Caco-2 (cell line): ENCODE measurements at regions of chr2 and their contacts with region 1.

Region 1: DNA sequence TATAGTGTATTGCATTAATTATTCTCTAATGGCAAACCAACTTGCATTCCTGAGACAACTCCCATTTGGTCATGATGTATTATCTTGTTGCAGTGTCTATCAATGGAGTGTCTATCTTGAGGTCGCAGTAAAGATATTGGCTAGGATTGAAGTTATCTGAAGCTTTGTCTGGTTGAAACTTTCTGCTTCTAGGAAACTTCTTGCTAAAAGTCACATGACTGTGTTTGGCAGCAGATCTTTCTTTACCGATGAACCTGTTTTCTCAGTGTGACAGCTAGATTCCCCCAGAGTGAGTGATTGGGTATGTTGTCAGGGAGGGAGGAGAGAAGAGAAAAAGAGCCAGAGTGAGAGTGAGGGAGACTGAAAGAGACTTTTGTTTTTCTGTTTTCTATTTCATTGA is 119.6 kb downstream of the QPCT start:
- DNase-seq: peak in 1 of 2 experiments; percentile 34
- H3K4me3 ChIP-seq: no peak overlapping the region
- H3K4me3 Mint-ChIP-seq: peak overlapping the region; percentile 5
- H3K27ac Mint-ChIP-seq: no peak overlapping the region
- H3K4me1 ChIP-seq: no peaks in the 10 kb centered on the region
- H3K4me1 Mint-ChIP-seq: peaks cover 14% of the 10 kb centered on the region
- H3K27me3 ChIP-seq: no peaks in the 10 kb centered on the region
- H3K27me3 Mint-ChIP-seq: no peaks in the 10 kb centered on the region
- CTCF ChIP-seq: no peak

Region 2: DNA sequence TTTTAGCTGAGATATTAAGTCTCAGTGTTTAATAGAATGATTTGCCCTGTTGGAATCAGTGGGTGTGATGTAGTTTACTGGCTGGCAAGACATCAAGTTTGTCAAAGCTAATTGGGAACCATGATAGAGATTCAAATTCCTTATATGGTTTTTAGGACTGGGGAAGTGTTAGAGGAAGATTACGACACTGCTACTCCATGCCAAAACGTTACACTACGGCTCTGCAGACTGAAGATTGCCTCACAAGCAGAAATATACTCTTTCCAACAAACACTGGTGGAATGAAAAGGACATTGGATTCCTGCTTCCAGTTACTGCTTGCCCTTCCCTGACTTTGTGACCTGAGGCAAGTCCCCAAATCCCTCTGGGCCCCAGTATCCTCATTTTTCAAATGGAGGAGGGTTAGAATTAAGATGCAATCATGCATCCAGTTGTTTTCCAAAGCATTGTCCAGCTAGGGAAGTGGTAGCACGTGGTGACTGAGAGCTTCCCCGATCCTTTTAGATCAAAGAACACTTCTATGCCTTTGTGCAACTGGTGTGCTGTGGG is 59.8 kb after region 1 on chr2:
- CTCF ChIA-PET with region 1: no interaction called
- POLR2A ChIA-PET with region 1: no interaction called
- intact Hi-C with region 1: loop called (anchors 5 kb)
- DNase-seq: no peak
- H3K4me3 ChIP-seq: no peak overlapping the region
- H3K4me3 Mint-ChIP-seq: no peak overlapping the region
- H3K27ac Mint-ChIP-seq: no peak overlapping the region
- H3K4me1 ChIP-seq: no peaks in the 10 kb centered on the region
- H3K4me1 Mint-ChIP-seq: peaks cover 14% of the 10 kb centered on the region
- H3K27me3 ChIP-seq: no peaks in the 10 kb centered on the region
- H3K27me3 Mint-ChIP-seq: no peaks in the 10 kb centered on the region
- CTCF ChIP-seq: no peak